Mammary epithelial cell (primary cell): ENCODE measurements at regions of chr9 and their contacts with region 1.

Region 1: GRCh38 chr9:5886114-5886939 is 4.4 kb upstream of the MLANA start:
- DNase-seq: peak; percentile 58
- H3K4me3 ChIP-seq: no peak overlapping the region
- H3K27ac ChIP-seq: no peak overlapping the region
- H3K4me1 ChIP-seq: peaks cover 7% of the 10 kb centered on the region
- H3K27me3 ChIP-seq: no peaks in the 10 kb centered on the region
- CTCF ChIP-seq: peak; percentile 98

Region 2: DNA sequence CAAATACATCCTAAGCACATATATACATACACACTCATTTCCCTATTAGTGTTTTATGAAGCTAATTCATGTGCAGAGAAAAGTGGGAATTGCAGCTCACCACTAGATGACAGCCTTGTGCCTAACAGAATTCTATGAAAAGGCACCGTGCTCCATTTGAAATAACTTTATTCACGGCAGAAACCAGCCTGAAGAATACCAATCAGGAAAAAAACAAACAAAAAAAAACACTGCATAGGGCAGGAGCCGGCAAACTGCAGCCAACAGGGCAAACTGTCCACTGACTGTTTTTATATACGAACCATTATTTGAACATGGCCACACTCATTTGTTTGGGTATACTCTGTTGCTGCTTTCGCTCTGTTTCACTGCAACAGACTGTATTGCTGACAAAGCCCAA is 87.0 kb before region 1 on chr9:
- CTCF ChIA-PET with region 1: interaction called, 4 read pairs
- dilution Hi-C with region 1: no loop called
- in situ Hi-C with region 1: no loop called
- intact Hi-C with region 1: loop called (anchors 1 kb)
- DNase-seq: peak; percentile 42
- H3K4me3 ChIP-seq: no peak overlapping the region
- H3K27ac ChIP-seq: no peak overlapping the region
- H3K4me1 ChIP-seq: no peaks in the 10 kb centered on the region
- H3K27me3 ChIP-seq: no peaks in the 10 kb centered on the region
- CTCF ChIP-seq: peak; percentile 87 to 93

Region 3: DNA sequence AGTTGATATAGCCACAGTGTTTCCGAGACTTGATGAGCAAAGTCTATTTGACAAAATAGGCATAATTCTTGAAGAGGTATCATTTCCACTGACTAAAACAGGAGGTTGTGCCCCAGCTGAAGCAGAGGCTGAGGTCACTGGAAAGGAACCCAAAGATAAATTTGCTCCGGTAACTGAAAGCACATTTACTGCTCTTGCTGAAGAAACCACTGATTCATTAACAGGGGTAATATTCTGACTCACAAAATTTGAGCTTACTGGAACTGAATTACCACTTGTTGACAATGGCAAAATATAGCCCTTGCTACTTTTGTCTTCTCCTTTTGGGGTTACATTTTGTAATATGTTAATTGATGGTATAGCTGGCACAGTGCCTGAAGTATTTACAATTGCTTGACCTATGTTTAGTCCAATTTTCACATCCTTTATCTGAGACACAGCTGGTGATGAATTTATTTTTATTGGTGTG is 34.6 kb after region 1 on chr9:
- CTCF ChIA-PET with region 1: no interaction called
- dilution Hi-C with region 1: no loop called
- in situ Hi-C with region 1: no loop called
- intact Hi-C with region 1: no loop called
- DNase-seq: no peak
- H3K4me3 ChIP-seq: no peak overlapping the region
- H3K27ac ChIP-seq: no peak overlapping the region
- H3K4me1 ChIP-seq: no peaks in the 10 kb centered on the region
- H3K27me3 ChIP-seq: no peaks in the 10 kb centered on the region
- CTCF ChIP-seq: no peak

Region 4: GRCh38 chr9:6008169-6008979 is 122.0 kb after region 1 on chr9:
- CTCF ChIA-PET with region 1: no interaction called
- dilution Hi-C with region 1: no loop called
- in situ Hi-C with region 1: no loop called
- intact Hi-C with region 1: loop called (anchors 5 kb)
- DNase-seq: peak; percentile 94
- H3K4me3 ChIP-seq: peak overlapping the region; percentile 58 to 94 (median 76)
- H3K27ac ChIP-seq: peak overlapping the region; percentile 70
- H3K4me1 ChIP-seq: peaks cover 21% of the 10 kb centered on the region
- H3K27me3 ChIP-seq: no peaks in the 10 kb centered on the region
- CTCF ChIP-seq: no peak

Region 5: DNA sequence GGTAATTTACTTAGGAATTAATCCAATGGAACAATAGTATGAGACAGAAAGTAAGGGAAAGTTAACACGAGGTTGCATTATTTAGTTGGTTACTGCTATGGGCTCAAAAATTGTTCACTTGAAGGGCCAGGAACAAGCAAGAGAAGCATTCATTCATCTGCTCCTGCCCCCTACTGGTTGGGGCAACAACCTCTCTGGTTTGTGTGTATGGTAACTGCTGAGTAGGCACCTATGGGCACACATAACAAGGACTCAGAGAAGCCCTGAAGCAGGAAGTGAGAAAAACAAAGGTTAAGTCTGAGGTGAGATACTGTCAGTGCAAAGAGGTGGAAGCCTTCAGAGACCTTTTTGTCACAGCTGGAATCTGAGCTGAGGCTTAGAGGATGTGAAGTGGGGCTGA is 163.5 kb after region 1 on chr9:
- CTCF ChIA-PET with region 1: interaction called, 11 read pairs
- dilution Hi-C with region 1: loop called (anchors 10 kb)
- in situ Hi-C with region 1: loop called (anchors 5 to 10 kb)
- intact Hi-C with region 1: loop called (anchors 1 kb)
- DNase-seq: peak; percentile 48
- H3K4me3 ChIP-seq: no peak overlapping the region
- H3K27ac ChIP-seq: no peak overlapping the region
- H3K4me1 ChIP-seq: peaks cover 7% of the 10 kb centered on the region
- H3K27me3 ChIP-seq: no peaks in the 10 kb centered on the region
- CTCF ChIP-seq: peak; percentile 61 to 73

Region 6: DNA sequence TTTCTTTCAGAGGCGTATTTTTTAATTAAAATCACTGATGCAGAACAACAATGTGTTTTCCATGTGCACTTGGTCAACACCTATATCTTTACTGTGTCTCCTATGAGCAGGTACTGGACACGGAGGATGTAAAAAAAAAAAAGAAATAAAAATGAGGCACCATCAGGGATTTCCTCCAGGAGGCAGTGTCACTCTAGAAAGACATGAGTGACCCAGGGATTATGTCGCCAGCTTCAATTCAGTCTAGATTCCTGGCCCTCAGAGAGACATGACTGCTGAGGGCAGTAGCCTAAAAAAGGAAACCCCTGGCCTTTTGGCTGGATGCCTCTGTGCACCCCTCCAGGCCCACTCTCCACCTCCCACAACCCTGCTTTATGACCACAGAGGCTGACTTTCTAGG is 311.0 kb after region 1 on chr9:
- CTCF ChIA-PET with region 1: no interaction called
- dilution Hi-C with region 1: no loop called
- in situ Hi-C with region 1: no loop called
- intact Hi-C with region 1: loop called (anchors 5 kb)
- DNase-seq: peak; percentile 24
- H3K4me3 ChIP-seq: no peak overlapping the region
- H3K27ac ChIP-seq: no peak overlapping the region
- H3K4me1 ChIP-seq: peaks cover 8% of the 10 kb centered on the region
- H3K27me3 ChIP-seq: no peaks in the 10 kb centered on the region
- CTCF ChIP-seq: peak; percentile 36 to 54

Region 7: GRCh38 chr9:6566409-6567139 is 680.2 kb after region 1 on chr9:
- CTCF ChIA-PET with region 1: no interaction called
- dilution Hi-C with region 1: no loop called
- in situ Hi-C with region 1: no loop called
- intact Hi-C with region 1: loop called (anchors 10 kb)
- DNase-seq: peak; percentile 99
- H3K4me3 ChIP-seq: peak overlapping the region; percentile 42 to 45 (median 44)
- H3K27ac ChIP-seq: peak overlapping the region; percentile 100
- H3K4me1 ChIP-seq: peaks cover 39% of the 10 kb centered on the region
- H3K27me3 ChIP-seq: no peaks in the 10 kb centered on the region
- CTCF ChIP-seq: peak in 1 of 2 donors; percentile 20